GM12878 (cell line): ENCODE measurements at regions of chr19 and their contacts with region 1.

Region 1: GRCh38 chr19:55503502-55504251 is 15.4 kb downstream of the SSC5D start:
- DNase-seq: peak; percentile 80
- ATAC-seq: peak; percentile 99
- H3K4me3 ChIP-seq: peak overlapping the region; percentile 43; the same call in 1 of the 2 replicates
- H3K27ac ChIP-seq: peak overlapping the region; percentile 80
- H3K4me1 ChIP-seq: peaks cover 5% of the 10 kb centered on the region
- H3K27me3 ChIP-seq: no peaks in the 10 kb centered on the region
- CTCF ChIP-seq: peak; percentile 94 to 99 (median 95)
- EP300 ChIP-seq: no peak
- POLR2A ChIP-seq: peak; percentile 50; the same call in 1 of the 2 replicates
- RAD21 ChIP-seq: peak; percentile 90

Region 2: GRCh38 chr19:55179606-55180484 is 323.8 kb before region 1 on chr19 and contains the start of gene SYT5:
- CTCF ChIA-PET with region 1: no interaction called
- POLR2A ChIA-PET with region 1: no interaction called
- RAD21 ChIA-PET with region 1: no interaction called
- SMC1A ChIA-PET with region 1: no interaction called
- in situ Hi-C with region 1: no loop called
- intact Hi-C with region 1: no loop called
- DNase-seq: no peak
- ATAC-seq: peak; percentile 60
- H3K4me3 ChIP-seq: peak within 1 kb of the TSS; percentile 35; the same call in 1 of the 2 replicates
- H3K27ac ChIP-seq: no peak within 1 kb of the TSS
- H3K4me1 ChIP-seq: peaks cover 12% of the 10 kb centered on the region
- H3K27me3 ChIP-seq: no peaks in the 10 kb centered on the region; a peak in 2 of 4 replicates
- CTCF ChIP-seq: no peak
- EP300 ChIP-seq: no peak
- POLR2A ChIP-seq: no peak
- RAD21 ChIP-seq: no peak
- polyA plus RNA-seq, gene SYT5: not detected

Region 3: GRCh38 chr19:55258828-55259539 is 244.7 kb before region 1 on chr19 and contains the start of gene PPP6R1:
- CTCF ChIA-PET with region 1: interaction called, 11 read pairs
- POLR2A ChIA-PET with region 1: interaction called, 3 read pairs
- RAD21 ChIA-PET with region 1: interaction called, 4 read pairs
- SMC1A ChIA-PET with region 1: no interaction called
- in situ Hi-C with region 1: no loop called
- intact Hi-C with region 1: no loop called
- DNase-seq: peak; percentile 97
- ATAC-seq: peak; percentile 85
- H3K4me3 ChIP-seq: peak within 1 kb of the TSS; percentile 100
- H3K27ac ChIP-seq: peak within 1 kb of the TSS; percentile 96
- H3K4me1 ChIP-seq: peaks cover 7% of the 10 kb centered on the region
- H3K27me3 ChIP-seq: no peaks in the 10 kb centered on the region
- CTCF ChIP-seq: no peak
- EP300 ChIP-seq: 0 out of 4 replicates have a peak, but pooled peaks have one; percentile 5 to 30
- POLR2A ChIP-seq: peak; percentile 89
- RAD21 ChIP-seq: no peak
- polyA plus RNA-seq, gene PPP6R1: 0.80 to 2.5 TPM

Region 4: DNA sequence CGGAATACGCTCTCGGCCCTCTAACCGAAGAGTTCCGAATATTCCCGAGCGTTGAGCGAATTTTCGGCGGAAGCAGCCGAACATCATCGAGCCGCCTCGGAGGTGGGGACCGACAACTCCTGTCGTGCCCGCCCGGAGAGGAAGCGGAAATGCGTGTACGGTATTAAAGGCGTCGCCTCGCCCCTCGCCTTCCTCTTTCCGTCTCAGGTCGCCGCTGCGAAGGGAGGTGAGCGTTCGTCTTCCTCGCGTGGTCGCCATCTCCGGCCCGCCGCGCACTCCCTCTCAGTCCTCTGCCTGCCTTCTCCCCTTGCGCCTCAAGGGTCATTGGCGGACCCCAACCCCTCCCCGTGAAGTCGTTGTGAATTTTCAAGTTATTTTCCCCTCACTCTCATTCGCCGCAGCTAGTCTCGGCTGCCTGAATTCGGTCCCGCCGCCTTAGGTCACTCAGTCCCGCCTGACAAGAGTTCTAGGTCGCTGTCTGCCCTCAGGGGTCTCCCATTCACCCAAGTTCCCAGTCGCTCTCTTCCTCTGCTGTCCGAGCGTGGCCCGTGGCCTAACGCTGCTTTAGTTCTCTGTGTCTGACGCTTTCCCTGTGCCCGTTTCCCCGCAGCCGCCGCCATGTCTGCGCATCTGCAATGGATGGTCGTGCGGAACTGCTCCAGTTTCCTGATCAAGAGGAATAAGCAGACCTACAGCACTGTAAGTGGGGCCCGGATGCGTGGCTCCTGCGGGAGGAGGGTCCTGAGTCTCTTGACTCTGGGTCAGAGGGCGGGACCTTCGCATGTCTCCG is 117.7 kb before region 1 on chr19 and contains the start of gene RPL28:
- CTCF ChIA-PET with region 1: interaction called, 10 read pairs
- POLR2A ChIA-PET with region 1: no interaction called
- RAD21 ChIA-PET with region 1: interaction called, 6 read pairs
- SMC1A ChIA-PET with region 1: no interaction called
- in situ Hi-C with region 1: no loop called
- intact Hi-C with region 1: no loop called
- DNase-seq: peak; percentile 93
- ATAC-seq: peak; percentile 80
- H3K4me3 ChIP-seq: peak within 1 kb of the TSS; percentile 94
- H3K27ac ChIP-seq: peak within 1 kb of the TSS; percentile 90
- H3K4me1 ChIP-seq: peaks cover 28% of the 10 kb centered on the region
- H3K27me3 ChIP-seq: no peaks in the 10 kb centered on the region
- CTCF ChIP-seq: no peak
- EP300 ChIP-seq: no peak
- POLR2A ChIP-seq: peak; percentile 100
- RAD21 ChIP-seq: no peak
- polyA plus RNA-seq, gene RPL28: 290 to 479 TPM

Region 5: GRCh38 chr19:55476100-55476775 is 27.4 kb before region 1 on chr19 and contains the start of gene ZNF628:
- CTCF ChIA-PET with region 1: interaction called, 26 read pairs
- POLR2A ChIA-PET with region 1: interaction called, 6 read pairs
- RAD21 ChIA-PET with region 1: interaction called, 21 read pairs
- SMC1A ChIA-PET with region 1: interaction called, 9 read pairs
- in situ Hi-C with region 1: no loop called
- intact Hi-C with region 1: no loop called
- DNase-seq: peak; percentile 83
- ATAC-seq: peak; percentile 97
- H3K4me3 ChIP-seq: peak within 1 kb of the TSS; percentile 86
- H3K27ac ChIP-seq: peak within 1 kb of the TSS; percentile 74
- H3K4me1 ChIP-seq: peaks cover 22% of the 10 kb centered on the region
- H3K27me3 ChIP-seq: no peaks in the 10 kb centered on the region
- CTCF ChIP-seq: no peak
- EP300 ChIP-seq: no peak
- POLR2A ChIP-seq: peak; percentile 75
- RAD21 ChIP-seq: no peak
- polyA plus RNA-seq, gene ZNF628: 0.04 TPM in 1 of 2 experiments, not detected in the other

Region 6: GRCh38 chr19:55549500-55550320 is 46.0 kb after region 1 on chr19:
- CTCF ChIA-PET with region 1: no interaction called
- POLR2A ChIA-PET with region 1: no interaction called
- RAD21 ChIA-PET with region 1: no interaction called
- SMC1A ChIA-PET with region 1: no interaction called
- in situ Hi-C with region 1: no loop called
- intact Hi-C with region 1: no loop called
- DNase-seq: no peak
- ATAC-seq: peak; percentile 48
- H3K4me3 ChIP-seq: no peak overlapping the region
- H3K27ac ChIP-seq: no peak overlapping the region
- H3K4me1 ChIP-seq: no peaks in the 10 kb centered on the region
- H3K27me3 ChIP-seq: peaks cover 1 to 7% of the 10 kb centered on the region in 2 experiments; a peak in 3 of 4 replicates
- CTCF ChIP-seq: no peak
- EP300 ChIP-seq: no peak
- POLR2A ChIP-seq: no peak
- RAD21 ChIP-seq: no peak

Region 7: GRCh38 chr19:55586976-55587668 is 83.4 kb after region 1 on chr19:
- CTCF ChIA-PET with region 1: interaction called, 10 read pairs
- POLR2A ChIA-PET with region 1: no interaction called
- RAD21 ChIA-PET with region 1: no interaction called
- SMC1A ChIA-PET with region 1: no interaction called
- in situ Hi-C with region 1: no loop called
- intact Hi-C with region 1: no loop called
- DNase-seq: peak; percentile 60
- ATAC-seq: peak; percentile 100
- H3K4me3 ChIP-seq: peak overlapping the region; percentile 64
- H3K27ac ChIP-seq: no peak overlapping the region
- H3K4me1 ChIP-seq: peaks cover 5% of the 10 kb centered on the region
- H3K27me3 ChIP-seq: no peaks in the 10 kb centered on the region
- CTCF ChIP-seq: no peak
- EP300 ChIP-seq: no peak
- POLR2A ChIP-seq: no peak
- RAD21 ChIP-seq: no peak

Region 8: GRCh38 chr19:55956389-55956788 is 452.7 kb after region 1 on chr19:
- CTCF ChIA-PET with region 1: no interaction called
- POLR2A ChIA-PET with region 1: no interaction called
- RAD21 ChIA-PET with region 1: no interaction called
- SMC1A ChIA-PET with region 1: no interaction called
- in situ Hi-C with region 1: no loop called
- intact Hi-C with region 1: no loop called
- DNase-seq: no peak
- ATAC-seq: no peak
- H3K4me3 ChIP-seq: no peak overlapping the region
- H3K27ac ChIP-seq: no peak overlapping the region
- H3K4me1 ChIP-seq: no peaks in the 10 kb centered on the region
- H3K27me3 ChIP-seq: no peaks in the 10 kb centered on the region
- CTCF ChIP-seq: no peak
- EP300 ChIP-seq: no peak
- POLR2A ChIP-seq: no peak
- RAD21 ChIP-seq: no peak